Activated T-helper 1 cell treated with anti-CD3 and anti-CD28 coated beads, Interleukin-12 subunit alpha, Interleukin-12 subunit beta, Interleukin-2, Interleukin-4 antibody, amounts not matched to agents 30 ng/mL and 10 ng/mL and 1 ng/mL, durations not matched to agents 14 hours and 24 hours and 36 hours (primary cell): ENCODE measurements at regions of chr3 and their contacts with region 1.

Region 1: DNA sequence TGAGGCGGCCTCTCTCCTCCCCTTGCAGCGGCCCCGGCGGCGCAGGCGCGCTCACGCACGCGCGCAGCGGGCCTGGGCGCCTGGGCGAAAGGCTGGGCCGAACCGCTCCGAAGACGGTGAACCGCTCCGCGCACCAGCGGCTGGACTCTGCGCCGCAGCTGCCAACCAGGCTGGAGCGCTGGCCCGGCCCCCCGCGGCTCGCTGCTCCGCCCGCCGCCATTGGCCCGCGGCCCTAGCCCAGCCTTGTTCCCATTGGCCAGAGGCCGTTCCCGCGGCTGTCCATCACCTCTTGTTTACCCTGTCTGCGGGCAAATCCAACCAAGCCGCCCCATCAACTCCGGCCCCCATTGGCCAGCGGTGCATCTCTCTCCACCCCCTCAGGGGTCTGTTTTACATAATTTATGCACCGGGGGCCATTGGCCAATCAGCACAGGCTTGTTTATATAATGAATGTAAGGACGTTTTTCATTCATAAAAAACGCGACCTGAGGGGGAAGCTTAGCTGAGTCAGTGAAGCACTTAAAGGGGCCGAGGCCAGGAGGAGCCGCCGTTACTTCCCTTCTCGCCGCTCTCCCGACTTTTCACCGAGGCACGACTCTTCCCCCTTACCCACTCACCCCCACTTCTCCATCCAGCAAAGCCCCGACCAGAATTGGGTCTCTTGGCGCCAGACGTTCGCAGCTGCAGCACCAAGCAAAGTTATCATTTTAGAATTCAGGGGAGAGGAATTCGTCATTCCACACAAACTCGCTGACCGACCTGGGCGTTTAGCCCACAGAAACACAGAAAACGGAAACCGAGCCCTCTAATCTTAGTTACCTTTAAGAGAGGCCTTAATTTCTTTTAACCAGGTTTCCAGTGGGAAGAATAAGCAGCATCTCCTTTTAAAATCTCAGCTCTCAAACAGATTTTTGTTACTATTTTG is at the start of gene ETV5:
- DNase-seq: peak; percentile 91
- H3K4me3 Mint-ChIP-seq: peak within 1 kb of the TSS; percentile 90
- H3K27ac Mint-ChIP-seq: peak within 1 kb of the TSS; percentile 87
- H3K4me1 Mint-ChIP-seq: peaks cover 42% of the 10 kb centered on the region
- H3K27me3 Mint-ChIP-seq: peaks cover 74% of the 10 kb centered on the region
- total RNA-seq, gene ETV5: 3.3 and 3.6 TPM in 2 replicates

Region 2: DNA sequence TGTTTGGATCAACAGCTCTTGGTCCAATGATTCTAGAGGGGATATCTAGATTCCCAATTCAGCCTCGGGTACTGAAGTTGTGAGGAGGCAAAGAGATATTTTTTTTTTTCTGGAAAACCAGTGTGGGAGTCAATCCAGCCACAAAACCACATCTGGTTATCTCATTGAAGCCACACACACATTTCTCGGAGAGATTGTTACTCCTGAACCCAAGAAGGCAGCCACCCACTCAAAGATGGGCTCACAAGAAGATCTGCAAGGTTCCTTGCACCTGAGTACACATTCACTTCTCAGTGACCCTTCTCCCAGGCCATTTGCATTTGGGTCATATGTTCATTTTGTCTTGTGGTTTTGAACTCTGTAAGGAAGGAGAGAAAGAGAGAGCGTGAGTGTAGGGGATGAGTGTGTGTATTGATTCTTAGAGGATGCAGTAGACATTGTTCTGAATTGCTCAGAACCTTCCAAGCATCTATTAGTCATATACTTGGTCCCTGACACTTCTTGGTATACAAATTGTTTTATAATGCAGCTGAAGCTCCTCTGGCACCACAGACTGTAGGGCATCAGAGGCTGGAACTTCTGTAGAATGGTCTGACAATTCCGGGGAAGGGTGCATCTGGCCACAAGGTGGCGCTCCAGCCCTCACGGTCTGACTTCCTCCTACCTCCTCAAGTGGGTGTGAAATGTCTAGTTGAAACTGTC is 132.1 kb before region 1 on chr3:
- intact Hi-C with region 1: loop called (anchors 1 kb)
- DNase-seq: peak; percentile 71
- H3K4me3 Mint-ChIP-seq: peak overlapping the region; percentile 11
- H3K27ac Mint-ChIP-seq: peak overlapping the region; percentile 82
- H3K4me1 Mint-ChIP-seq: peaks cover 18% of the 10 kb centered on the region
- H3K27me3 Mint-ChIP-seq: peaks cover 37% of the 10 kb centered on the region

Region 3: GRCh38 chr3:186166036-186166435 is 56.8 kb after region 1 on chr3:
- intact Hi-C with region 1: no loop called
- DNase-seq: no peak
- H3K4me3 Mint-ChIP-seq: no peak overlapping the region
- H3K27ac Mint-ChIP-seq: no peak overlapping the region
- H3K4me1 Mint-ChIP-seq: no peaks in the 10 kb centered on the region
- H3K27me3 Mint-ChIP-seq: peaks cover 37% of the 10 kb centered on the region

Region 4: GRCh38 chr3:186180891-186181481 is 71.8 kb after region 1 on chr3:
- intact Hi-C with region 1: loop called (anchors 2 kb)
- DNase-seq: peak; percentile 4
- H3K4me3 Mint-ChIP-seq: no peak overlapping the region
- H3K27ac Mint-ChIP-seq: no peak overlapping the region
- H3K4me1 Mint-ChIP-seq: peaks cover 41% of the 10 kb centered on the region
- H3K27me3 Mint-ChIP-seq: peaks cover 13% of the 10 kb centered on the region

Region 5: GRCh38 chr3:186259612-186260383 is 150.6 kb after region 1 on chr3:
- intact Hi-C with region 1: loop called (anchors 5 kb)
- DNase-seq: peak; percentile 37
- H3K4me3 Mint-ChIP-seq: no peak overlapping the region
- H3K27ac Mint-ChIP-seq: peak overlapping the region; percentile 25
- H3K4me1 Mint-ChIP-seq: peaks cover 21% of the 10 kb centered on the region
- H3K27me3 Mint-ChIP-seq: peaks cover 15% of the 10 kb centered on the region

Region 6: GRCh38 chr3:186570096-186570940 is 461.1 kb after region 1 on chr3 and contains the start of gene DNAJB11:
- intact Hi-C with region 1: loop called (anchors 1 kb)
- DNase-seq: peak; percentile 98
- H3K4me3 Mint-ChIP-seq: peak within 1 kb of the TSS; percentile 91
- H3K27ac Mint-ChIP-seq: peak within 1 kb of the TSS; percentile 99
- H3K4me1 Mint-ChIP-seq: peaks cover 59% of the 10 kb centered on the region
- H3K27me3 Mint-ChIP-seq: no peaks in the 10 kb centered on the region
- total RNA-seq, gene DNAJB11: 71.0 and 75.8 TPM in 2 replicates

Region 7: DNA sequence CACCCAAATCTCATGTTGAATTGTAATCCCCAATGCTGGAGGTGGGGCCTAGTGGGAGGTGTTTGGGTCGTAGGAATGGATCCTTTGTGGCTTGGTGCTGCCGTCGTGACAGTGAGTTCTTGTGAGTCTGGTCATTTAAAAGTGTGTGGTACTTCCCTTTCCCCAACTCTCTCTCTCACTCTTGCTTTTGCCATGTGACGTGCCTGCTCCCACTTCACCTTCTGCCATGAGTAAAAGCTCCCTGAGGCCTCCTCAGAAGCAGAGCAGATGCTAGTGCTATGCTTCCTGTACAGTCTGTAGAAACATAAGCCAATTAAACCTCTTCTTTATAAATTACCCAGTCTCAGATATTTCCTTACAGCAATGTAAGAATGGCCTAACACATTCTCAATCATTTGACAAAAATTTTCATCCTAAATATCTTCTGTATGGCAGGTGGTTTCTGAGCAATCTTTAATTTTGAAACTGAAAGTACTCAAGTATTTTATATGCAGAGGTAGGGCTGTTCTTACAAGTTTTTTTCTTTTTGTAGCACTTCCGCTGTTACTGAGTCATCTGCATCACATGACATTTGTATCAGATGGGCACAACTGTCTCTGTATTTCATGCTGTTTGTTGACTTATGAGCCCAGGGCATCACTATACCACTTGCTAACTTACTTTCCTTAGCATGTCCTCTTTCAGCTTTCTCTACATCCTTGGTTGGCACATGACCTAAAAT is 1021.3 kb after region 1 on chr3:
- intact Hi-C with region 1: loop called (anchors 5 kb)
- DNase-seq: peak; percentile 47
- H3K4me3 Mint-ChIP-seq: peak overlapping the region; percentile 51
- H3K27ac Mint-ChIP-seq: peak overlapping the region; percentile 91
- H3K4me1 Mint-ChIP-seq: peaks cover 58% of the 10 kb centered on the region
- H3K27me3 Mint-ChIP-seq: no peaks in the 10 kb centered on the region